ENCODE measurements at regions of chr2 and their contacts with region 1.

Region 1: GRCh38 chr2:20446917-20447436 is at the start of gene RHOB:
- DNase-seq: peak; percentile 93
- H3K4me3 ChIP-seq: peak within 1 kb of the TSS; percentile 80
- H3K27me3 ChIP-seq: no peaks in the 10 kb centered on the region
- CTCF ChIP-seq: no peak
- polyA plus RNA-seq, gene RHOB: 76.7 and 87.2 TPM in 2 replicates

Region 2: DNA sequence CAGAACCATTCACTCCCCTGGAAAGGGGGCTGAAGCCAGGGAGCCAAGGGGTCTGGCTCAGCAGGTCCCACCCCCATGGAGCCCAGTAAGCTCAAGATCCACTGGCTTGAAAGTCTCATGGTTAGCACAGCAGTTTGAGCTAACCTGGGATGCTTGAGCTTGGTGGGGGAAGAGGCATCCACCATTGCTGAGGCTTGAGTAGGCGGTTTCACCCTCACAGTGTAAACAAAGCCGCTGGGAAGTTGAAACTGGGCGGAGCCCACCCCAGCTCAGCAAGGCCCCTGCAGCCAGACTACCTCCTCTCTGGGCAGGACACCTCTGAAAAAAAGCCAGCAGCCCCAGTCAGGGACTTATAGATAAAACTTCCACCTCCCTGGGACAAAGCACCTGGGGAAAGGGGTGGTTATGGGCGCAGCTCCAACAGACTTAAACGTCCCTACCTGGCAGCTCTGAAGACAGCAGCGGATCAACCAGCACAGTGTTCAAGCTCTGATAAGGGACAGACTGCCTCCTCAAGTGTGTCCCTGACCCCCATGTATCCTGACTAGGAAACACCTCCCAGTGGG is 530.5 kb before region 1 on chr2:
- CTCF ChIA-PET with region 1: no interaction called
- POLR2A ChIA-PET with region 1: no interaction called
- DNase-seq: no peak
- H3K4me3 ChIP-seq: no peak overlapping the region
- H3K27me3 ChIP-seq: no peaks in the 10 kb centered on the region
- CTCF ChIP-seq: no peak

Region 3: GRCh38 chr2:20264629-20265028 is 182.3 kb before region 1 on chr2:
- CTCF ChIA-PET with region 1: no interaction called
- POLR2A ChIA-PET with region 1: interaction called, 22 read pairs
- DNase-seq: no peak
- H3K4me3 ChIP-seq: no peak overlapping the region
- H3K27me3 ChIP-seq: no peaks in the 10 kb centered on the region
- CTCF ChIP-seq: no peak

Region 4: DNA sequence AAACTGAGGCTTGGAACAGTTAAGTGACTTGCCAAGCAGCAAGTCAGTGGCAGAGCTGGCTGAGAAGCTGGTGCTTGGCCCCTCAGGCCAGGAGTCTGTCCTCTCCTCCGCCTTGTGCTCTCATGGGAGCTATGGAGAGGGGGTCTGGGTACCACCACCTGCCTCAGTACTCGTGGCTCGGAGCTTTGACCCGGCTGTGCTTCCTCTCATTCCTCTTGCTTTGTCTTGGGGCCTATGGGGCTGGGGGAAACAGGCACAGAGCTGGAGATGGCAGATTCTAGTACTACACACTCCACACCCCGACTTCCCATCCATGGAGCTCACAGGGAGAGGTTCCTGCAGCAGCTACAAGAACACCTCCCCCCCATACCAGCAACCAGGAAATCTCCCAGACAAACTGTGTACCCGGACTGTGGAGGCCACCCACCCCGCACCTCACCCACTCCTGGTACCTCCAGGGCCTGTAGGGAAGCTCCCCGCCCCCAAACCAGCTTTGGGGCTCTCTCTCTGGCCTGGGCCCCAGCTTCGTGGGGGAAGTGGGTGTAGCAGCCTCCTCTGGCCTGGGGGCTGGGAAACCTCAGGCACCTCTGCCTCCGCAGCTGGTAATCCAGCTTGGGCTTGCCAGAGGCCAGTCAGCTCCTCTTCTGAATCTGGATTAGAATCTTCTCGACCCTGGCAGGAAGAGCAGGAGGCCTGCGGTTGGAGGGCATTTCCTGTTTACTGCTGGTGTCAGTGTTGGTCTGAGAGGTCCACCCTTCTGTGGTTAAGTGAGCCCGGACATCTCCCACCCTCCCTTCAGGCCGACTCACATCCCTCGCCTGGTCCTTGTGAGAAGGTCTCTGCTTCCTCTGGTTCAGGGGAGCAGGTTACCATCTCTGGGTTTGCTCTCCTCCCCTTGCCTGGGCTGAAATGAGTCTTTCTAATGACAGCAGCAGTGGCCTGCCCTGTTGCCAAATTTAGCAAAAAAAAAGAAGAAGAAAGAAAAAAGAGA is 22.4 kb before region 1 on chr2:
- CTCF ChIA-PET with region 1: interaction called, 8 read pairs
- POLR2A ChIA-PET with region 1: interaction called, 10 read pairs
- DNase-seq: peak; percentile 73
- H3K4me3 ChIP-seq: no peak overlapping the region
- H3K27me3 ChIP-seq: peaks cover 7% of the 10 kb centered on the region; the same call in 1 of the 2 replicates
- CTCF ChIP-seq: no peak

Region 5: GRCh38 chr2:20600756-20601325 is 153.9 kb after region 1 on chr2:
- CTCF ChIA-PET with region 1: interaction called, 13 read pairs
- POLR2A ChIA-PET with region 1: interaction called, 14 read pairs
- DNase-seq: no peak
- H3K4me3 ChIP-seq: no peak overlapping the region
- H3K27me3 ChIP-seq: no peaks in the 10 kb centered on the region
- CTCF ChIP-seq: peak; percentile 42

Region 6: DNA sequence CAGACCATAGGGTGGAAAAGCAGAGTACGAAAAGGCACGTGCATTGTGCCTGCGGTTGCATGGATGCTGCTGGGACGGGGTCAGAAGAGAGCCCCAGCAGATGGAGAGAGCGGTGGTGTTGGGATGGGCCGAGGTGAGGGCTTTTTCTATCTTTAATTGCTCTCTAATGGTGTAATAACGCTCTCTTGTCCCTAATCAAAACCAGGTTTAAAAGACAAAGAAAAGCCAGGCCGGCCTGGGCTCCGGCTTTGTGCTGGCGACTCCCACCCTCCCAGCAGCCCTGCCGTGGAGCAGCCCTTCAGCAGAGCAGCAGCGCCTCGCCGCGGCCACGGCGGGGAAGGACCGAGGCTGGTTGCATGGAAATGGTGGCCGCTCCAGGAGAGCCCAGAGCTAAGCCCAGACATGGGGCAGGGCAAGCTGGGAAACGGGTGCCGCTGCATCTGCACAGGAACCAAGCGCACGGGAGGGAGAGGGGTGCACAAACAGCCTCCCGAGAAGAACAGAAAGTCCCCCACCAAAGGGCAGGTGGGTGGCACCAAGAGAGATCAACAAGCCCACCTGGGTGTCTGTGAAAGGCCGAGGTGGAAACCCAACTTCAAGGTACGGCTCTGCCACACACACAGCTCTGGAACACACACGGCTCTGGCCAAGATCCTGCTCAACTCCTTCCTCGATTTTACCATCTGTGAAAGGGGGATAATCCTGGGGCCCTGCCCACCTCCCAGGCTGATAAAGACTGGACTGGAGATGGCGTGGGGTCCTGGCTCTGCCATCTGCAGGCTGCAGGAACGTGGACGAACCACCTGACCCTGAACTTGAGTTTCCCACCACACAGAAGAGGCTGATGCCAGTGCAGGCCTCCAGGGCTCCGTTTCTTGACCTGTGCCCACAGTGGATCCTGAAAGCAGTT is 189.0 kb after region 1 on chr2:
- CTCF ChIA-PET with region 1: interaction called, 72 read pairs
- POLR2A ChIA-PET with region 1: interaction called, 17 read pairs
- DNase-seq: no peak
- H3K4me3 ChIP-seq: no peak overlapping the region
- H3K27me3 ChIP-seq: no peaks in the 10 kb centered on the region; the same call in 1 of the 2 replicates
- CTCF ChIP-seq: peak; percentile 97